ENCODE measurements at regions of chr6 and their contacts with region 1.

Region 1: DNA sequence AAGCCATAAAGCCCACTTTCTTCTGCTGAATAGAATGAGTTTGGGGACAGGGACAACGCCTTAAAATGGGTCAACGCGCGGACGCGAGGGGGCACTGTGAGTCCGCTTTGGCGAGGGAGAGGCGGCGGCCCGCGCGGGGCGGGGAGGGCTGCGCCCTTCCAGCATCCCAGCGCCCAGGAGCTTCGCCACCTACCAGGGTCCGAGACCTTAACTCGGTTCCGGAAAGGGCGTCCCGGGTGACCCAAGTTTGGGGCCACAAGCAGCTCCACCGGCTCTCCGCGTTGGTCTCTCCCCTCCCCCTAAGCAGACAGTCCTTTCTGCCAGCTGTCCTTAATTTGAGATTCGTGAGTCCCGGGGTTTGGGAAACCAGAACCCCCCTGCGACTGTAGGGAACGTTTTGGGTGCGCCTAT is 1.8 kb upstream of the SAMD5 start:
- DNase-seq: peak in 1 of 2 experiments; percentile 53
- H3K4me3 ChIP-seq: peak overlapping the region; percentile 87
- H3K27ac ChIP-seq: no peak overlapping the region
- H3K4me1 ChIP-seq: peaks cover 6% of the 10 kb centered on the region; the same call in 1 of the 2 replicates
- H3K27me3 ChIP-seq: no peaks in the 10 kb centered on the region
- CTCF ChIP-seq: peak; percentile 87

Region 2: DNA sequence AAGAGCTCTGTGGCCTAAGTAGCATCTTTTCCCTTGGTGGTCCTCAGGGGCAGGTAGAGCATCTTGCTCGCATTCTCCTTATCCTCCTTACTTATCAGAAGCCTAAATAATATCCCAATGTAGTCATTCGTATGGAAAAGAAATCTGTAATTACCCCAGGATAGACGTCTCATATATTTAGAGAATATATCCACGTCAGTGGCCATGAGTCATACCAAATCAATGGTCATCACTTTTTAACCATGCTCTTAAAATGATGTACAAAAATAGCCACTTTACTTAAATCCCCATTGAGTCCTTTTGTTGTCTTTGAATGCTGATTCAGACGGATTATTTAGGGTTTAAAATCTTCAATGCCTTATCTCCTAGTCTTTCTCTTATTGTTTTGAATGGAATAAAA is 534.2 kb before region 1 on chr6:
- CTCF ChIA-PET with region 1: no interaction called
- POLR2A ChIA-PET with region 1: no interaction called
- intact Hi-C with region 1: no loop called
- DNase-seq: no peak
- H3K4me3 ChIP-seq: no peak overlapping the region
- H3K27ac ChIP-seq: no peak overlapping the region
- H3K4me1 ChIP-seq: peaks cover 13% of the 10 kb centered on the region
- H3K27me3 ChIP-seq: no peaks in the 10 kb centered on the region
- CTCF ChIP-seq: no peak

Region 3: DNA sequence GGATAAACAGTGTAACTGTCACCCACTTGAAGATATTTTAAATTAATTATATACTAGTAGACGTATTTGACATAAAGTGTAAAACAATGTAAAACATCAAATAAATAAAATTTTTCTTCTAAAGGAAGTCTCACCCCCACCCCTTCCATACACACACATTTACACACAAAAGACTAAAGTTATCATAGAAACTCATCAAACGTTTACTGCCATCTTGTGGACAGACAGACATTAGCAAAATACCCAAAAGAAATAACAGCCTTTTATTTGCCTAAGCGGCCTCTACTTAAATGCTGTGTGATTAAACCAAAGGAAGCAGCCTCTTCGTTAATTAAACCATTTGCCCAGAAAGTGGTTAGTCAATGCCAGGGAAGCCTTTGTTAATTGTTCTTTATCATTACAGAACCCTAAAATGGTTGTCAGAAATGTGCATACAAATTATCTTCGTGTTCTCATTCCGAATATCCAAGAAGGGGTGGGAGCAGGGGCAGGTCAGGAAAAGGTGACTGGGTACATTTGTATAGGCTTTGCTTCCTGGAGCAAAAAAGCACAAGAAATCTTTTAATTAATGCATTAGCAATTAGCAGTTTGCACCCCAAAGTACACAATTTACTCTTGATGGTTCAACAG is 659.7 kb after region 1 on chr6:
- CTCF ChIA-PET with region 1: interaction called, 3 read pairs
- POLR2A ChIA-PET with region 1: no interaction called
- intact Hi-C with region 1: loop called (anchors 5 kb)
- DNase-seq: peak in 1 of 2 experiments; percentile 58
- H3K4me3 ChIP-seq: no peak overlapping the region
- H3K27ac ChIP-seq: no peak overlapping the region
- H3K4me1 ChIP-seq: no peaks in the 10 kb centered on the region
- H3K27me3 ChIP-seq: no peaks in the 10 kb centered on the region
- CTCF ChIP-seq: peak; percentile 83

Region 4: DNA sequence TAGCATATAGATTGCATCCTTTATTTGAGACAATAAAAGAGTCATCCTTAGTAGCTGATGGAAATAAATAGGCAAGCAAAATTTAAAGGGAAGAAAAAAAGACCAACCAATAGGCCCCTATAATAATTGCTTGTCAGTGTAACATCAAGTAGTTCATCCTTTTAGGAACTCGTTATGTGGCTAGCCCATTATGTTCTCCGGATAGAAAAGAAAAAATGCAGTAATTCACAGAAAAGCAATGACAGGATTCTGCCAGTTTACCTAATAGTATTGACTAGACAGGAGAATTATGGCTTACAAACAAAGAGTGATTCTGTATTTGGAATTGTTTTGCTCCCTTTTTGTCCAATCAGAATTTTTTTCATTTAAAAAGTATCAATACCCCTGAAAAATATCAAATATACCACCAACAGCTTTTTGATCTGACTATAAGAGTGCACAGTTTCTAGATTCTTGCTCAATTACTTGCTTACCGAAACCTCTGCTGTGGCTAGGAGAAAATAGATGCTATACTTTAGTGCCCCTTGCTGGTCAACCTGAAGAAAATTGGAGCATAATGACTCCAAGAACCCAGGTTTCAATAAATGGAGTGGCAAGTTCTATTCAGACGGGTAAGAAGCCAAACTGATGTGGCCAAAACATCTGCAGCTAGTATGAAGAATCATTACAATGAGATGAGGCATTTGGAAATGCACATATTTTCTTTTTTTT is 744.4 kb after region 1 on chr6:
- CTCF ChIA-PET with region 1: interaction called, 3 read pairs
- POLR2A ChIA-PET with region 1: no interaction called
- intact Hi-C with region 1: loop called (anchors 5 kb)
- DNase-seq: no peak
- H3K4me3 ChIP-seq: no peak overlapping the region
- H3K27ac ChIP-seq: peak overlapping the region; percentile 24; the same call in 1 of the 2 replicates
- H3K4me1 ChIP-seq: no peaks in the 10 kb centered on the region
- H3K27me3 ChIP-seq: no peaks in the 10 kb centered on the region
- CTCF ChIP-seq: peak; percentile 66

Region 5: DNA sequence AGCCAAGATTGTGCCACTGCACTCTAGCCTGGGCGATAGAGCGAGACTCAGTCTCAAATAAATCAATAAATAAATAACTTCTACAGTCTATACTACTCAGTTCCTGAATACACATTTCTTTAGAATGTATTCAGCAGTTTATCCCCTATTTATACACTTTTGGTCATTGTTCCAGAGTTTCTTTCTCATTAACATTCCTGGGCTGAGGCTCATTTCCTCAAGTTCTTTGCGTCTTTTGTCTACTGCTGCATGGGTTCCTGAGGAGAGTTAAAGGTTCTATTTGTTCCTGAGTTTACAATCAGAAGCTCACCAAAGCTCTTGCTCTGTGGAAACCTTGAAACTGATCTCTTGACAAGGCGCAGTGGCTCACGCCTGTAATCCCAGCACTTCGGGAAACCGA is 798.3 kb after region 1 on chr6:
- CTCF ChIA-PET with region 1: no interaction called
- POLR2A ChIA-PET with region 1: no interaction called
- intact Hi-C with region 1: loop called (anchors 5 kb)
- DNase-seq: no peak
- H3K4me3 ChIP-seq: no peak overlapping the region
- H3K27ac ChIP-seq: no peak overlapping the region
- H3K4me1 ChIP-seq: peaks cover 34% of the 10 kb centered on the region
- H3K27me3 ChIP-seq: no peaks in the 10 kb centered on the region
- CTCF ChIP-seq: no peak

Region 6: GRCh38 chr6:148464319-148465010 is 957.8 kb after region 1 on chr6:
- CTCF ChIA-PET with region 1: no interaction called
- POLR2A ChIA-PET with region 1: no interaction called
- intact Hi-C with region 1: loop called (anchors 2 kb)
- DNase-seq: peak; percentile 53 to 63
- H3K4me3 ChIP-seq: no peak overlapping the region
- H3K27ac ChIP-seq: no peak overlapping the region
- H3K4me1 ChIP-seq: peaks cover 7% of the 10 kb centered on the region
- H3K27me3 ChIP-seq: no peaks in the 10 kb centered on the region
- CTCF ChIP-seq: peak; percentile 96

Region 7: GRCh38 chr6:148653138-148653776 is 1146.5 kb after region 1 on chr6:
- CTCF ChIA-PET with region 1: no interaction called
- POLR2A ChIA-PET with region 1: interaction called, 10 read pairs
- intact Hi-C with region 1: no loop called
- DNase-seq: no peak
- H3K4me3 ChIP-seq: no peak overlapping the region
- H3K27ac ChIP-seq: no peak overlapping the region
- H3K4me1 ChIP-seq: no peaks in the 10 kb centered on the region
- H3K27me3 ChIP-seq: no peaks in the 10 kb centered on the region
- CTCF ChIP-seq: no peak